PC-9 (cell line): ENCODE measurements at regions of chr6 and their contacts with region 1.

Region 1: DNA sequence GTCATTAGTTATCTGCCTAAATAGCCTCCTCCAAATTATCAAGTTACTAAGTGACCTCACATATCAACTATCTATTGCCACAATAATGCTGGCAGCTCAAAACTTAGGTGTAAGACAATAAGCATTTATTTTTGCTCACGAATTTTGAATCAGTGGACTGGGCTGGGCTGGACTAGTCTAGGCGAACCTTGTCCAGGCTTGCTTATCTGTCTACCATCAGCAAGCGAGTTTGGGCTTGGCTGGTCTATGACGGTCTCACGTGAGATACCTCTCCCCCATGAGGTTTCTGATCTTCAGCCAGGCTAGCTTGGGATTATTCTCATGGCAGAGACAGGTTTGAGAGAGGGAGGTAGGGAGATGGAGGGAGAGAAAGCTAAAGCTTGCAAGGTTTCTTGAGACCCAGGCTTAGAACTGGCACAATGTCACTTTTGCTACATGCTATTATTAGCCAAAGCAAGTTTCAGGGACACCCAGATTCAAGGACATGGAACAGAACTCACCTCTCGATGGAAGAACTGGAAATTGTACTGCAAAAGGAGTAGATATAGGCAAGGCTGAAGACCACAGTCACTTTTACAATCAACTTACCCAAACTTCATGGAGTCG is 80.9 kb downstream of the WASF1 start:
- DNase-seq: no peak
- H3K4me3 ChIP-seq: no peak overlapping the region
- H3K27ac ChIP-seq: no peak overlapping the region
- H3K4me1 ChIP-seq: no peaks in the 10 kb centered on the region
- H3K27me3 ChIP-seq: no peaks in the 10 kb centered on the region
- CTCF ChIP-seq: no peak

Region 2: DNA sequence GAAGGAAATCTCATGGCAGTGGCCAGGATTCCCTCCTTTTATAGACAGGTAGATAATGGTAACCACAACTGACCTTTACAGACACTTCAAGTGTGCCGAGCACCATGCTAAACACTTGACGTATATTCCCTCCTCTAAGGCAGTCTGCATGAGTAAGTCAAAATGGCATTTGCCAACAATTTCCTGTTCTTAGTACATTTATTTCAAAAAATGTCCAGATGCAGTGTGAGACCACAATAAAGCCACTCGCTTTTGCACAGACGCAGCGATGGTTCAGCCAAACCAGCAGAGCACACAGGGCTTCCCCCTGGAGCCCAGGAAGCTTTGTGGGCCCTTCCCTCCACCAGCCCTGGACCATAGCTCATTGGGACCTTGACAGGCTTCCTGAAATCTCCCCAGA is 136.9 kb before region 1 on chr6:
- CTCF ChIA-PET with region 1: interaction called, 17 read pairs
- POLR2A ChIA-PET with region 1: no interaction called
- intact Hi-C with region 1: no loop called
- DNase-seq: peak in 1 of 2 experiments; percentile 90
- H3K4me3 ChIP-seq: no peak overlapping the region
- H3K27ac ChIP-seq: peak overlapping the region; percentile 69
- H3K4me1 ChIP-seq: peaks cover 47% of the 10 kb centered on the region
- H3K27me3 ChIP-seq: no peaks in the 10 kb centered on the region
- CTCF ChIP-seq: no peak

Region 3: GRCh38 chr6:110495949-110496348 is 397.3 kb after region 1 on chr6:
- CTCF ChIA-PET with region 1: no interaction called
- POLR2A ChIA-PET with region 1: no interaction called
- intact Hi-C with region 1: no loop called
- DNase-seq: no peak
- H3K4me3 ChIP-seq: no peak overlapping the region
- H3K27ac ChIP-seq: no peak overlapping the region
- H3K4me1 ChIP-seq: 0 out of 2 replicates have a peak, but pooled peaks cover 7% of the 10 kb centered on the region
- H3K27me3 ChIP-seq: no peaks in the 10 kb centered on the region
- CTCF ChIP-seq: no peak

Region 4: DNA sequence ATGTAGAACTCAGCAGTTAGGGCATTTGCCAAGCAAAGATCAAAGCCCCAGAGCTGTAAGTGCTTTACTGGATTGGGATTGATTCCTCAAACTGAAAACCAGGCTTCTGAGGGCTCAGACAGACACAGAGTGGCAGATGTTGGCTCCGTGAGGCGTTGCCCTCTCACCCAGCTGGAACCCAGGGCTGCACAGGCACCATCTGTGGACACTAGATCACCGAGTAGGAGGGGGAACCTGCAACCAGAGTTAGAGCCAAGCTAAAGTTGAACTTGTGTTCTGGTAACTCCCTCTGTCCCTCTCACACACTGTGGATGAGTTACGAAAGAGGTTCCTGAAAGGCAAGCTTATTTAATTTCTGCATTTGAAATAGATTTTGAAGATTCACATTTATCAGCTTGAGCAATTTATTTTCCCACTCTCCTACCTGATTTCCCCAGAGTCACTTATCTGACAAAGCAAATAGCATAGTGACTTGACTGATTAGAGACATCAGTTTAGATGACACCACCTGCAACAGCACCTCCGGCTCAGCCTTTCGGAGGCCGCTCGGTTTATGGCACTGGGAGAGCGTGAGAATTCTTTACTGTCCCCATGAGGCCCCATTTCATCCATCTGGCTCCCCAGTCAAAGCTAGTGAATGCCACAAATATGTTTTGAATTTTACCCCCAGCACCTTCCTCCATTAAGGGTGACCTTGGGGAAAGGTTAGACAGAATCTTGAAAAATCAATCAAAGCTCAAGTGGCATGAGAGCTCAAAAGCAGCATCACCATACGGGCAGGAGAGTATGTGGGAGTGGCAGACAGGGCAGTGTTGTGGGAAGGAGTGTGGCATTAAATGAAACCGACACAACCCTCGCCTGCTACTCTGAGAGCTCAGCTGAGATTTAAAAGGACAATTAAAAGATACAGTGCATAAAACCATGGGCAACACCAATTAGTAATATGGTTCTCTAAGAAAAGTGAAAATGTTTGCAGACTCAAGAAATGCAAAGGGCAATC is 931.7 kb after region 1 on chr6:
- CTCF ChIA-PET with region 1: no interaction called
- POLR2A ChIA-PET with region 1: no interaction called
- intact Hi-C with region 1: no loop called
- DNase-seq: no peak
- H3K4me3 ChIP-seq: no peak overlapping the region
- H3K27ac ChIP-seq: no peak overlapping the region
- H3K4me1 ChIP-seq: no peaks in the 10 kb centered on the region
- H3K27me3 ChIP-seq: no peaks in the 10 kb centered on the region
- CTCF ChIP-seq: no peak